ENCODE measurements at regions of chr11 and their contacts with region 1.

Region 1: DNA sequence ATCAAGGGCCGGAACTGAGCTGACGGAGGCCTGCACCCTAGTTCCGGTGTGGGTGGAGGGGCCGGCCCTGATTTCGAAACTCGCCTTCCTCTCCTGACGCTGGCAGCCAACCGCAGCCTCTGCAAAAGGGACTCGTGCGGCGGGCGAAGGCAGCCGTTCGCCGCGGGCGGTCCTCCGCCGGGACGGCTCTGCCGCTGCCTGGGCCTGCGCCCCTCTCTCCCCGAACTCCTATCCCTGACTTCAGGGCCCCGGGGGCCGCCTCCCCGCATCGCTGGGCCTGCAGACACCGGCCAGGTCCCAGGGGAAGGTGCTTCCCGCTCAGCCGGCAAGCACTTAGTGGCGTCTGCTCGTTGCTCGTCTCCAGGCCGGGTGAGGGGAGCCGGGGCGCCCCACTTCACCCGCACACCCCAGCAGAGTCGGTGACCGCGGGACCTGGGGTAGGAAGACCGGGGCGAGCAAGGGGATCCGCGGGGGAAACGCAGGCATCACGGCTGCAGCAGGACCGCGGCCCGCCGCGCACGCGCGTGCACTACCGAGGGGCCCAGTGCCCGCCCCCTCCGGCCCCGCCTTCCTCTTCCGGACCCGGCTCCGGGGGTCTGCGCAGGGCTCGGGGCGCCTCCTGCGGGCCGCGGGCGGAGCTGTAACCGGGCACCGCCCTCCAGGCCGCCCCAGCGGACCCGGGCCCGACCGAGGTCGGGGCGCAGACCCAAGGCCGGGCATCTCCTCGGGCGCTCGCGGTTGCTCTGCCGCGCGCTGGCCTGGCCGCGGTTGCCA is 464 bp upstream of the ANKRD13D start:
- DNase-seq: peak; percentile 84 to 94 (median 91)
- ATAC-seq: peak; percentile 82
- H3K4me3 ChIP-seq: peak overlapping the region; percentile 95
- H3K4me3 Mint-ChIP-seq: peak overlapping the region; percentile 76 to 98 (median 85)
- H3K27ac ChIP-seq: peak overlapping the region; percentile 81
- H3K27ac Mint-ChIP-seq: peak overlapping the region; percentile 95 to 99 (median 97)
- H3K4me1 ChIP-seq: peaks cover 54 to 60% of the 10 kb centered on the region in 2 donors
- H3K4me1 Mint-ChIP-seq: peaks cover 29 to 73% (median 57%) of the 10 kb centered on the region in 7 donors
- H3K27me3 ChIP-seq: no peaks in the 10 kb centered on the region
- H3K27me3 Mint-ChIP-seq: peaks cover 0 to 2% (median 0%) of the 10 kb centered on the region in 5 donors

Region 2: GRCh38 chr11:67233584-67234190 is 55.0 kb before region 1 on chr11:
- CTCF ChIA-PET with region 1: no interaction called
- POLR2A ChIA-PET with region 1: no interaction called
- intact Hi-C with region 1: no loop called
- DNase-seq: no peak
- ATAC-seq: no peak
- H3K4me3 ChIP-seq: no peak overlapping the region
- H3K4me3 Mint-ChIP-seq: peak overlapping the region in 2 of 10 donors; percentile 4 to 8
- H3K27ac ChIP-seq: peak overlapping the region; percentile 15
- H3K27ac Mint-ChIP-seq: peak overlapping the region; percentile 3 to 84 (median 57)
- H3K4me1 ChIP-seq: peaks cover 0 to 1% of the 10 kb centered on the region in 2 donors
- H3K4me1 Mint-ChIP-seq: peaks cover 12 to 46% (median 31%) of the 10 kb centered on the region in 7 donors
- H3K27me3 ChIP-seq: no peaks in the 10 kb centered on the region
- H3K27me3 Mint-ChIP-seq: no peaks in the 10 kb centered on the region

Region 3: DNA sequence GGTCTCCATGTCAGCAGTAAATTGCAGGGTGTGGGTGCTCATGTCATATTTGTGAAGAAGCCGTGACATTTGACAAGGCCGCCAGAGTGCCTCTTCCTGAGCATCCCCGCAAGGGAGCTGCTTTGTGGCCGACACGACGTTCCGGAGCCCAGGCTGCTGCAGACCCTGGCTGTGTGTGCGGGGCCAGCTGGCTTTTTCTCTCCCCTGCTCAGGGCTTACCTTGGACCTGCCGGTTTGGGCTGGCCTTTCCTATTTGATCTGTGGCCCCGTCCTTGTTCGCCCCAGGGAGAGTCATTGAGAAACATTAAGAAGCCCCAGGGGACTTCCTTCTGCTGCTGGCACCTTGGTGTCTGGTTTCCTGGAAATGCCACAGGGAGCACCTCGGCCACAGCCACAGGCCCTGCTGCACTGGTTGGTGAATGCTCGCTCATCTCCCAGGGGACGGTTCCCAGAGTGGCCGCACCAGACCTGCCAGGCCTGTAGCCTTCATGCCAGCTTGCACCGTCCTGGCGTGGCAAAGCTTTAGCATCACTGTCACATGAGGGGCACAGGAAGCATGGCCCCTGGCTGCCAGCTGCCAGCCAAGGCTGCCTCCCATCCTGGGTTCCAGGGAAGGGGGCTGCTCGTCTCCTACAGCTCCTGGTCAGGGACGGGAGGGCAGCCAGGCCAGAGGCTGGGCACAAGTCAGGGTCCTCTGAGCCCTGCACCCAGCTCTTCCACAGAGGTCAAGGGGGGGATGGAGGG is 16.9 kb before region 1 on chr11:
- CTCF ChIA-PET with region 1: interaction called, 24 read pairs
- POLR2A ChIA-PET with region 1: interaction called, 729 read pairs
- intact Hi-C with region 1: loop called (anchors 1 kb)
- DNase-seq: peak in 8 of 9 donors; percentile 52 to 73 (median 66)
- ATAC-seq: peak; percentile 45
- H3K4me3 ChIP-seq: peak overlapping the region; percentile 94
- H3K4me3 Mint-ChIP-seq: peak overlapping the region; percentile 91 to 99 (median 96)
- H3K27ac ChIP-seq: peak overlapping the region; percentile 93
- H3K27ac Mint-ChIP-seq: peak overlapping the region; percentile 87 to 100 (median 97)
- H3K4me1 ChIP-seq: peaks cover 85 to 87% of the 10 kb centered on the region in 2 donors
- H3K4me1 Mint-ChIP-seq: peaks cover 48 to 88% (median 85%) of the 10 kb centered on the region in 7 donors
- H3K27me3 ChIP-seq: no peaks in the 10 kb centered on the region
- H3K27me3 Mint-ChIP-seq: no peaks in the 10 kb centered on the region

Region 4: GRCh38 chr11:67277231-67277961 is 11.2 kb before region 1 on chr11:
- CTCF ChIA-PET with region 1: interaction called, 19 read pairs
- POLR2A ChIA-PET with region 1: interaction called, 729 read pairs
- intact Hi-C with region 1: loop called (anchors 1 kb)
- DNase-seq: peak; percentile 79 to 94 (median 93)
- ATAC-seq: peak; percentile 97
- H3K4me3 ChIP-seq: peak overlapping the region; percentile 90
- H3K4me3 Mint-ChIP-seq: peak overlapping the region; percentile 62 to 99 (median 88)
- H3K27ac ChIP-seq: peak overlapping the region; percentile 93
- H3K27ac Mint-ChIP-seq: peak overlapping the region; percentile 87 to 100 (median 97)
- H3K4me1 ChIP-seq: peaks cover 79 to 87% of the 10 kb centered on the region in 2 donors
- H3K4me1 Mint-ChIP-seq: peaks cover 47 to 83% (median 66%) of the 10 kb centered on the region in 7 donors
- H3K27me3 ChIP-seq: no peaks in the 10 kb centered on the region
- H3K27me3 Mint-ChIP-seq: no peaks in the 10 kb centered on the region

Region 5: GRCh38 chr11:67303132-67303834 is 14.6 kb after region 1 on chr11 and contains the start of gene SSH3:
- CTCF ChIA-PET with region 1: interaction called, 5 read pairs
- POLR2A ChIA-PET with region 1: interaction called, 124 read pairs
- intact Hi-C with region 1: loop called in 1 of 2 experiments (anchors 1 kb)
- DNase-seq: peak in 6 of 9 donors; percentile 17 to 63 (median 24)
- ATAC-seq: peak; percentile 80
- H3K4me3 ChIP-seq: peak within 1 kb of the TSS; percentile 61
- H3K4me3 Mint-ChIP-seq: peak within 1 kb of the TSS; percentile 25 to 79 (median 68)
- H3K27ac ChIP-seq: peak within 1 kb of the TSS; percentile 76
- H3K27ac Mint-ChIP-seq: peak within 1 kb of the TSS in 6 of 9 donors; percentile 17 to 74 (median 55)
- H3K4me1 ChIP-seq: peaks cover 6 to 9% of the 10 kb centered on the region in 2 donors
- H3K4me1 Mint-ChIP-seq: peaks cover 0 to 18% (median 11%) of the 10 kb centered on the region in 7 donors
- H3K27me3 ChIP-seq: no peaks in the 10 kb centered on the region
- H3K27me3 Mint-ChIP-seq: no peaks in the 10 kb centered on the region
- total RNA-seq, gene SSH3: 8.8 to 23.8 (median 15.0) TPM

Region 6: GRCh38 chr11:67489885-67490274 is 201.2 kb after region 1 on chr11:
- CTCF ChIA-PET with region 1: no interaction called
- POLR2A ChIA-PET with region 1: no interaction called
- intact Hi-C with region 1: no loop called
- DNase-seq: no peak
- ATAC-seq: no peak
- H3K4me3 ChIP-seq: no peak overlapping the region
- H3K4me3 Mint-ChIP-seq: peak overlapping the region in 1 of 10 donors; percentile 70
- H3K27ac ChIP-seq: peak overlapping the region; percentile 21
- H3K27ac Mint-ChIP-seq: peak overlapping the region in 7 of 9 donors; percentile 25 to 81 (median 69)
- H3K4me1 ChIP-seq: peaks cover 22 to 23% of the 10 kb centered on the region in 2 donors
- H3K4me1 Mint-ChIP-seq: peaks cover 25 to 41% (median 37%) of the 10 kb centered on the region in 7 donors
- H3K27me3 ChIP-seq: no peaks in the 10 kb centered on the region
- H3K27me3 Mint-ChIP-seq: no peaks in the 10 kb centered on the region

Measured in naive thymus-derived CD4-positive, alpha-beta T cell (primary cell).